PC-3 (cell line): ENCODE measurements at regions of chr1 and their contacts with region 1.

Region 1: DNA sequence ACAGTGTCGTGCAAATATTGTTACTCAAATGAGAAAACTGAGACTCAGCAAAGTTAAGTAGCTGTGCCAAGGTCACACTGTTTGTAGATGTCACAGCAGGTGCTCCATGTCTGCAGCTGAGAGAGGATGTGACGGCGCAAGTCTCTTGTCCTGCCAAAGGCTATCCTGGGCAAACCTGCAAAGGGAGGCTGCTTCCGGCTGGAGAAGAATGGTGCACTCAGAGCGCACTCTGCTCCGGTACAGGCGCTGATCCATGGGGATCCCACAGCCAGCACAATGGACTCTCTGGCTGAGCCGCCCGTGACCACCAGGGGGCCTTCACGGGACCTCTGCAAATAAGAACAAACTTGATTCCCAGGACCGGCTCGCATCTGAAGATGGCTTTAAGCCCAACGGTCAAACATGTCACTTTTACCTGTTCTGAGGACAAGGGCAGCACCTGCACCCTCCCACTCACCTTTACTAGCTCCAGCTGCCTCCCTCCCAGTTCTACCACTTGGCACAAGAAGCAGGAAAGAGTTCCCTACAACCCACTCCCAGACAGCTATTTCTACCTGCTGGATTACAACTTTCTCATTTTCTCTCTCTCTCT is 21.9 kb downstream of the RD3 start:
- DNase-seq: peak; percentile 87
- ATAC-seq: peak; percentile 99
- H3K4me3 ChIP-seq: no peak overlapping the region
- H3K27ac ChIP-seq: no peak overlapping the region
- H3K4me1 ChIP-seq: peaks cover 2% of the 10 kb centered on the region; the same call in 1 of the 2 replicates
- H3K27me3 ChIP-seq: peaks cover 13% of the 10 kb centered on the region
- CTCF ChIP-seq: peak; percentile 96

Region 2: GRCh38 chr1:211654838-211655787 is 185.1 kb after region 1 on chr1:
- CTCF ChIA-PET with region 1: no interaction called
- POLR2A ChIA-PET with region 1: no interaction called
- intact Hi-C with region 1: loop called (anchors 1 kb)
- DNase-seq: peak; percentile 93
- ATAC-seq: peak; percentile 88
- H3K4me3 ChIP-seq: no peak overlapping the region
- H3K27ac ChIP-seq: no peak overlapping the region
- H3K4me1 ChIP-seq: peaks cover 13% of the 10 kb centered on the region
- H3K27me3 ChIP-seq: no peaks in the 10 kb centered on the region
- CTCF ChIP-seq: peak; percentile 99